ENCODE measurements at regions of chr15 and their contacts with region 1.

Region 1: DNA sequence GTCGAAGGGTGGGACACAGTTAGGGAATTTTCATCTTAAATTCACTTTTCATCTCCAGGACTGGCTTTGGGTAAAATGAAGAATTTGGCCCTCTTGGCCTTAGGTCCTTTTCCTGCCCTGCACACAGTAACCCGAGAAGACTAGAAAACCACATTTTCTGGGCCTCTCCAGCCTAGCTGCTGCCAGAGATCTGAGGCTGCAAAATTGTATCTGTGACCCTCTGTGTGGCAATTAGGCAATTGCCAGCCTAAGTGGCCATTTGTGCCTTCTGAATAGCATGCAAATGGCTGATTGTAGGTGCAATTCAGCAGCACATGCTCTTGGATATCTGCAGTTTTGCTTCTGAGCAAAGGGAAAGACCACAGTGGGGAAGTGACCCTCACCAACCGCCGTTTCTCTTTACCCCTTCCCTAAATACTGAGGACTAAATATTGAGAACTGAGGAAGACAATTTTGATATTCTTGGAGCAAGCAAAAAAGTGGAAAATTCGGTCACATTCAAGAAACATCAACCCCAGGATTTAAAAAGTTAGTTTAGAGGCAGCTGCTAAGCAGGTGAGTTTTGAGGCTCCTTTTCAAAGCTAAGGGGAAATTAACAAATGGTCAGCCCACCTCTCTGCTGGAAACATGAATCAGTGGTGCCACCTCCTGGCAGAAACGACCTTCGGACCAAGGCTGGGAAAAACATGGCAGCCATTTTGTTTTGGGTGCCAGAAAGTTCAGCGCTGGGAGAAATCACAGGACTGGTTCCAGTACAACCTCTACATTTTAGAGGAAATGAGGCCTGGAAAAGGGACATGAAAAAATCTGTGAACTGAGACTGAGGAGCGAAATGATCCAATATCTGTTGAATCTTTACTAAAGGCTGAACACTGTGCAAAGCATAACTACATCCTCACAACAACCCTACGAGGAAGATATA is 56.6 kb upstream of the PRTG start:
- DNase-seq: peak; percentile 74
- CTCF ChIP-seq: peak; percentile 72

Region 2: DNA sequence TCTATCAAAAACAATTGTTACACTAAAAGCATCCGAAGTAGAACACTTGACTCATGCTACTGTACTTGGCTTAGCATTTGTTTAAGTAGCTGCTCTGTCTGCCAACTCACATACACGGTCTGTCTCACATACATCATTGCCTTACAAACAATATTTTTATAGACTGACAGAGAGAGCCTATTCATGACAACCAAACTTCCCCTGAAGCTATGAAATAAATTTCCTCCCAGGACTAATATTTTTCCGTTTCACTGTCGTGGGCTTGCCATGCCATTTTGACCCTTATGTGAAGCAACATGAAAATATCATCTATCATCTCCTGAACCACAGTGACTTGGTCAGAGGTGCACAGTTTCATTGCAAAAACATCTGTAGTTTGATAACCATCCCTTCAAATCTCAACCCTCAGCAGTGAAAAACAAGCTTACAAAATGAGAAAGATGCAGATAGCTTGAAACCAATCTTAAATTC is 145.0 kb before region 1 on chr15:
- in situ Hi-C with region 1: loop called (anchors 10 kb)
- DNase-seq: no peak
- CTCF ChIP-seq: no peak

Region 3: DNA sequence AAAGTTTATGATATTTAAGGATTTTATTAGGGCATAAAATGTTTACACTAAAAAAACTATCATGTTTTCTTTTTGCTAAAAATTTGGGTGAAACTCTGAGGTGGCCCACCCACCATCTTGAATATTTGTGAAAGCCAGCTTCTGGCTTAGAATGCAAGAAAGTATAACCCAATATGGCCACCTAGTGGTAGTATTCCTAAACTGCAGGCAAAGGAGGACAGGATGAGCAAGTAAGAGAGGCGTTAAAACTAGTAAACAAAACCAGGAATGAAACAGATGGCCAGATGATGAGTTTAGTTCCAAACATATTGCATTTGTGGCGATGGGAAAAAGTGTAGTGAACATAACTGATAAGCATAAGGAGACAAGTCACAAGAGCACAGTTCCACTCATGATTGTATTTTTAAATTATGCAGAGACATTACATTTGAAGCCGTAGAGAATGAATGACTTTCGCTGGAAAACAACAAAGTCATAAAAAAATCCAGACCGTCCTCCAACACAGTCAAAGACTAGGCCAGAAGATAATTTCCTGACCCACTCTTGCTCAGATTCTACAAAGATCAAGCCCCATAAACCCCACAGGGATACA is 46.7 kb after region 1 on chr15:
- in situ Hi-C with region 1: no loop called
- DNase-seq: peak; percentile 64
- CTCF ChIP-seq: peak; percentile 86

Measured in GM13977 (cell line).